ENCODE measurements at regions of chrX and their contacts with region 1.

Region 1: DNA sequence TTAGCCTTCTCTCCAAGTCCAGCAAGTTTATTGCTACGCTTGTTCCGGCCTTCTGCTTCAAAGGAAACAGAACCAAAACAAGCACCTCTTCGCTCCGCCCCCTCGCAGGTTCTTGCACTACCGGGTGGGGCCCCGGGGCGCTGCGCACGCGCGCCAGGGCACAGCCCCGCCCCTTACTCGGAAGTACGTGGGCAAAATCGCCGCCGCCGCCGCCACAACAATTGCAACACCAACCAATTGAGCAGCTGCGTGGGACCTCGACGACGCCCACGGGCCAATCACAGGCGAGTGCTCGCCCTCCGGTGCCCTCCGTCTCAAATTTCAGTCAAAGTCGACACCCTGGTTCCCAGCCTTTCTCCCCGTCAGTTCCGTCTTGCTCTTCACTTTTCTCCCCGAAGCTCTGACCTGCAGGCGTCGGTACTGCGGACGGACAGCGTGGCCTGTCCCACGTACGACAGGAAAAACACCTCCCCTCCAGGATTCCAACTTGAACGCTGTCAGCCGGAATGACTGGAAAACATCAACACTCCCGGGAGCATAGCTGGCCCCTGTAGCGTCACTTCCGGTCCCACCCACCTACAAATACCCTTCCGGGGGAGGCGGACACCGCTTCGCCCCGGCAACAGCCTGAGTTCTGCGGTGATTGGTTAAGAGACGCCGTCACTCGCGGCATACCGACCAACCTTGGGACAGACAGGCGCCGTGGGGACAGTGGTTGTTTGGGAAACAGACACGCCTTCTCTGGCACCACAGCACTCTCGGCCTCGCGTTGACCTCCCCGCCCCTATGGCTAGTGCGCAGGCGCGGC is 624 bp upstream of the OTUD5 start:
- DNase-seq: peak; percentile 84 to 97 (median 95)
- ATAC-seq: peak; percentile 86
- H3K4me3 ChIP-seq: peak overlapping the region; percentile 89
- H3K4me3 Mint-ChIP-seq: peak overlapping the region; percentile 81 to 100 (median 98)
- H3K27ac ChIP-seq: peak overlapping the region; percentile 100
- H3K27ac Mint-ChIP-seq: peak overlapping the region; percentile 98 to 100 (median 100)
- H3K4me1 ChIP-seq: peaks cover 26 to 36% of the 10 kb centered on the region in 2 donors
- H3K4me1 Mint-ChIP-seq: peaks cover 9 to 55% (median 38%) of the 10 kb centered on the region in 7 donors
- H3K27me3 ChIP-seq: no peaks in the 10 kb centered on the region
- H3K27me3 Mint-ChIP-seq: peaks cover 0 to 2% (median 0%) of the 10 kb centered on the region in 5 donors

Region 2: GRCh38 chrX:47217642-47218279 is 1740.3 kb before region 1 on chrX:
- CTCF ChIA-PET with region 1: no interaction called
- POLR2A ChIA-PET with region 1: no interaction called
- intact Hi-C with region 1: loop called in 1 of 2 experiments (anchors 5 kb)
- DNase-seq: peak in 8 of 9 donors; percentile 81 to 100 (median 98)
- ATAC-seq: peak; percentile 86
- H3K4me3 ChIP-seq: peak overlapping the region; percentile 98
- H3K4me3 Mint-ChIP-seq: peak overlapping the region; percentile 89 to 99 (median 95)
- H3K27ac ChIP-seq: peak overlapping the region; percentile 97
- H3K27ac Mint-ChIP-seq: peak overlapping the region; percentile 98 to 100 (median 99)
- H3K4me1 ChIP-seq: peaks cover 16 to 20% of the 10 kb centered on the region in 2 donors
- H3K4me1 Mint-ChIP-seq: peaks cover 26 to 44% (median 41%) of the 10 kb centered on the region in 7 donors
- H3K27me3 ChIP-seq: no peaks in the 10 kb centered on the region
- H3K27me3 Mint-ChIP-seq: peaks cover 0 to 2% (median 0%) of the 10 kb centered on the region in 5 donors

Region 3: GRCh38 chrX:48574270-48575266 is 383.5 kb before region 1 on chrX and contains the start of gene RBM3:
- CTCF ChIA-PET with region 1: no interaction called
- POLR2A ChIA-PET with region 1: interaction called, 7 read pairs
- intact Hi-C with region 1: loop called (anchors 1 kb)
- DNase-seq: peak; percentile 64 to 96 (median 92)
- ATAC-seq: peak; percentile 94
- H3K4me3 ChIP-seq: peak within 1 kb of the TSS; percentile 68
- H3K4me3 Mint-ChIP-seq: peak within 1 kb of the TSS; percentile 88 to 100 (median 97)
- H3K27ac ChIP-seq: peak within 1 kb of the TSS; percentile 99
- H3K27ac Mint-ChIP-seq: peak within 1 kb of the TSS; percentile 95 to 100 (median 99)
- H3K4me1 ChIP-seq: peaks cover 16 to 20% of the 10 kb centered on the region in 2 donors
- H3K4me1 Mint-ChIP-seq: peaks cover 6 to 32% (median 25%) of the 10 kb centered on the region in 7 donors
- H3K27me3 ChIP-seq: no peaks in the 10 kb centered on the region
- H3K27me3 Mint-ChIP-seq: no peaks in the 10 kb centered on the region
- total RNA-seq, gene RBM3: 176 to 374 (median 329) TPM

Region 4: DNA sequence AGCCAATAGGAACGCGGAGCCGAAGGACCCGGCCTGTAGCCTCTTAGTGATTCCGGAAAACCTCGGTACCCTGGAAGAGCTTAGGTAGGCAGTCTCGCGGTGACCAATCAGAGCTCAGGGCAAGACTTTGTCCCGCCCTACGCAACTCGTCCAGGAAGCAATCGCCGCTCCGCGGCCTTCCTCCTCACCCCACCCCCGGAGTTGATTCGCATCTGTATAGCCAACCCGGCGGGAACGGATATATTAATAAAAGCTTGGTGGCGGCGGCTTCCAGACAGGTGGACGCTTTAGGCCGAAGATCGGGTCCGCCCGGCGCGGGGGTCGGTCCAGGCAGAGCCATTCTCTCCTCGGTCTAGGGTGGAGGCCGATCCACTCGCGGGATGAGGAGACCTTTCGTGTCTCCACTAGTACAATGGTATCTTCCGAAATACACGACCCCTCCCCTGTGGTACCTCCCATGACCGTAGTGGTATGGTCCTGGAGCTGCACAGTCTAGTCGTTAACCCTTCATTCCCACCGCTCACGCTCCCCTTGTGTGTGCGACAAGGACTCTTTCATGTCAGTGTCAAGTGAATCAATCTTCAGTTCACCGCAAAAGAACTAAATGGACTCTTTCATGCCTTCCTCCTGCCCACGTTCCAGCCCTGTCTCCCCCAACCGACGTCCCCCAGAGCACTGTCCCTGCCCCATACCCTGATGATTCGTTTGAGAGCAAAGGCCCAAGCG is 220.7 kb before region 1 on chrX:
- CTCF ChIA-PET with region 1: no interaction called
- POLR2A ChIA-PET with region 1: interaction called, 6 read pairs
- intact Hi-C with region 1: loop called (anchors 1 to 5 kb)
- DNase-seq: peak; percentile 55 to 94 (median 89)
- ATAC-seq: peak; percentile 98
- H3K4me3 ChIP-seq: peak overlapping the region; percentile 81
- H3K4me3 Mint-ChIP-seq: peak overlapping the region; percentile 79 to 98 (median 94)
- H3K27ac ChIP-seq: peak overlapping the region; percentile 91
- H3K27ac Mint-ChIP-seq: peak overlapping the region; percentile 90 to 99 (median 96)
- H3K4me1 ChIP-seq: peaks cover 12 to 14% of the 10 kb centered on the region in 2 donors
- H3K4me1 Mint-ChIP-seq: peaks cover 8 to 31% (median 24%) of the 10 kb centered on the region in 7 donors
- H3K27me3 ChIP-seq: no peaks in the 10 kb centered on the region
- H3K27me3 Mint-ChIP-seq: no peaks in the 10 kb centered on the region

Region 5: GRCh38 chrX:48911412-48912182 is 46.4 kb before region 1 on chrX and contains the start of gene SLC35A2:
- CTCF ChIA-PET with region 1: no interaction called
- POLR2A ChIA-PET with region 1: interaction called, 8 read pairs
- intact Hi-C with region 1: loop called in 1 of 2 experiments (anchors 2 kb)
- DNase-seq: peak; percentile 75 to 92 (median 90)
- ATAC-seq: peak; percentile 78
- H3K4me3 ChIP-seq: peak within 1 kb of the TSS; percentile 77
- H3K4me3 Mint-ChIP-seq: peak within 1 kb of the TSS; percentile 86 to 96 (median 90)
- H3K27ac ChIP-seq: peak within 1 kb of the TSS; percentile 76
- H3K27ac Mint-ChIP-seq: peak within 1 kb of the TSS; percentile 86 to 98 (median 96)
- H3K4me1 ChIP-seq: peaks cover 32 to 42% of the 10 kb centered on the region in 2 donors
- H3K4me1 Mint-ChIP-seq: peaks cover 20 to 61% (median 42%) of the 10 kb centered on the region in 7 donors
- H3K27me3 ChIP-seq: no peaks in the 10 kb centered on the region
- H3K27me3 Mint-ChIP-seq: peaks cover 0 to 3% (median 0%) of the 10 kb centered on the region in 5 donors
- total RNA-seq, gene SLC35A2: 13.9 to 36.7 (median 18.5) TPM

Region 6: DNA sequence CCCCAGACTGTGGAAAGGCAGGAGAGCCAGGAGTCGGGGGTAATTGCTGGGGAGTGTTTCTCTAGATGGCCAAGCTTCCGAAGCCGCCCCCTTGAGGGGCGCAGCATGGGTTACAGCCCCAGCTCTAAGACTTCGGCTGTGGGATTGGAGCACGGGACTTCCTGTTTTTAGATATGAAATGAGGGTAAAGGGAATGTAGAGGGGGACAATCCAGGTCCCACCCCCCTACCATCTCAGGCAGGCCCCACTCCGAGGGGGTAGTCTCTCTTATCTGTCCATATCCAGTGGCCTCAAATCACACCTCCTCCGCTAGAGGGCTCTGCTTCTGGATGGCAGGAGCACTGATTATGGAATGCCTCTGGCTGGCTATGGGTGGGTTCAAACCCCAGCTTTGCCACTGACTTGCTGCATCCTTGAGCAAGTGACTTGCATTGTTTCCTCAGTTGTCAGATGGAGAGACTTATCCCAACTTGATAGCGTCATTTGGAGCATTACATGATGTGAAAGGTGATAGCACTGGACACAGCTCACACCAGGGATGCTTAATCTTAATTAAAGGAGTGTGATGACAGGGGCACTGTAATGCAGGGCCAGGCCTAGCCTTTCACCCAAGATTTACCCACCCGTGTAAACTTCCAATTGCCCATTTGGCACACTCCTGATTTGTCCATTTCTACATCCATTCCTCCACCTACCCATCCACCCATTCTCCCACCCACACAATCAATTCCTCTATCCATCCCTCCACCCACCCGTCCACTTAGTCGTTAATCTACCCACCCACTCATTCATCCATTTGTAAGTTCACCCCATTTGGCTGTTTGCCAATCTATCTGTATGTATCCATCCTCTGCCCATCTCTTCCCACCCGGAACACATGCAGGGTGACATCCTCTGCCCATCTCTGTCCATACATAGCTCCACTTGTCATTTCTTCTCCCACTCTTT is 14.5 kb after region 1 on chrX:
- CTCF ChIA-PET with region 1: interaction called, 3 read pairs
- POLR2A ChIA-PET with region 1: interaction called, 11 read pairs
- intact Hi-C with region 1: no loop called
- DNase-seq: peak in 4 of 9 donors; percentile 17 to 28 (median 22)
- ATAC-seq: peak; percentile 74
- H3K4me3 ChIP-seq: peak overlapping the region; percentile 30
- H3K4me3 Mint-ChIP-seq: peak overlapping the region in 9 of 10 donors; percentile 12 to 72 (median 57)
- H3K27ac ChIP-seq: no peak overlapping the region
- H3K27ac Mint-ChIP-seq: no peak overlapping the region
- H3K4me1 ChIP-seq: peaks cover 0 to 8% of the 10 kb centered on the region in 2 donors
- H3K4me1 Mint-ChIP-seq: peaks cover 6 to 17% (median 12%) of the 10 kb centered on the region in 7 donors
- H3K27me3 ChIP-seq: no peaks in the 10 kb centered on the region
- H3K27me3 Mint-ChIP-seq: no peaks in the 10 kb centered on the region

Region 7: GRCh38 chrX:49100704-49101628 is 142.9 kb after region 1 on chrX:
- CTCF ChIA-PET with region 1: no interaction called
- POLR2A ChIA-PET with region 1: no interaction called
- intact Hi-C with region 1: loop called in 1 of 2 experiments (anchors 1 kb)
- DNase-seq: peak; percentile 75 to 90 (median 87)
- ATAC-seq: peak; percentile 97
- H3K4me3 ChIP-seq: peak overlapping the region; percentile 82
- H3K4me3 Mint-ChIP-seq: peak overlapping the region; percentile 80 to 93 (median 90)
- H3K27ac ChIP-seq: peak overlapping the region; percentile 78
- H3K27ac Mint-ChIP-seq: peak overlapping the region; percentile 74 to 95 (median 91)
- H3K4me1 ChIP-seq: no peaks in the 10 kb centered on the region
- H3K4me1 Mint-ChIP-seq: peaks cover 0 to 8% (median 0%) of the 10 kb centered on the region in 7 donors
- H3K27me3 ChIP-seq: no peaks in the 10 kb centered on the region
- H3K27me3 Mint-ChIP-seq: no peaks in the 10 kb centered on the region

Region 8: GRCh38 chrX:49120099-49120498 is 162.1 kb after region 1 on chrX:
- CTCF ChIA-PET with region 1: no interaction called
- POLR2A ChIA-PET with region 1: no interaction called
- intact Hi-C with region 1: no loop called
- DNase-seq: no peak
- ATAC-seq: no peak
- H3K4me3 ChIP-seq: no peak overlapping the region
- H3K4me3 Mint-ChIP-seq: peak overlapping the region in 3 of 10 donors; percentile 9 to 24 (median 12)
- H3K27ac ChIP-seq: no peak overlapping the region
- H3K27ac Mint-ChIP-seq: peak overlapping the region in 2 of 9 donors; percentile 12 to 30
- H3K4me1 ChIP-seq: peaks cover 16 to 18% of the 10 kb centered on the region in 2 donors
- H3K4me1 Mint-ChIP-seq: peaks cover 32 to 59% (median 37%) of the 10 kb centered on the region in 7 donors
- H3K27me3 ChIP-seq: no peaks in the 10 kb centered on the region
- H3K27me3 Mint-ChIP-seq: no peaks in the 10 kb centered on the region